ENCODE measurements at regions of chr4 and their contacts with region 1.

Region 1: GRCh38 chr4:121823505-121824170 is at the start of gene CCNA2:
- DNase-seq: peak; percentile 95
- H3K4me3 ChIP-seq: peak within 1 kb of the TSS; percentile 86 to 96 (median 86)
- H3K27ac ChIP-seq: peak within 1 kb of the TSS; percentile 64
- H3K4me1 ChIP-seq: peaks cover 27% of the 10 kb centered on the region
- H3K27me3 ChIP-seq: no peaks in the 10 kb centered on the region
- CTCF ChIP-seq: no peak
- POLR2A ChIP-seq: peak; percentile 73
- total RNA-seq, gene CCNA2: 63.1 and 65.4 TPM in 2 replicates

Region 2: DNA sequence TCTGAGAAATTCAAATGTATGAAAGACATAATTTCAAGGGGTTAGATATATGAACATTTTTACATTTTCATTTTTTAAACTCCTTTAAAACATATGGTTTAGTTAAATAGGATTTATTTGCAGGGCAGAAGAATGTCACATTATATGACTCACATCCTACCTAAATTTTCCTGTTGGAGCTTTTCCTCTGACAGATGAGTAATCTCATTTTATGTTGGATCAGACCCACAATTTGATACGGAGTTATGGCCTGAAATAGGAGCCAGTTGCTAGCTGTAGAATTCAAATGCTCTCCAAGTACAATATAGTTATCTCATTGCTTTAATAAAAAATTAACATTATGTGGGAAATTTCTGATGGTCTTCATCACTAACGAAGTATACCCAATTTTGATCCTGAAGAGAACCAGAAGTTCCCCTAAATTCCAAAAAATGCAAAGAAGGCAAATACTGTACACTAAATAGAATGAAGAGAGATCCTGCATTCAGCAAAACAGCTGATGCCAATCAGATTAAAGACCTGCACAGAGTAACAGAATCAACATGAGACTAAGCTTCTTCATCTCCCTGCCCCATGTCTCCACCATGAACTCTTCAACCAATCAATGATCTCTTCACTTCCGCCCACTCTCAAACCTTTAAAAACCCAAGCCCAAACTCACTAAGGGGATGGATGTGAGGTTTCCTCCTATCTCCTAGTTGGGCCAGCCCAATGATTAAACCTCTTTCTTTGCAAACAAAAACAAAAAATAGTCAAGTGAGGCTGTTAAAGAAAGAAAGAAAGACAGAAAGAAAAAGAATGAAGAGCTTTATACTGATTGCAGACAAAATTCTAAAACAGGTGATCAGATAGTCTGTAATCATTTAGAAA is 33.4 kb before region 1 on chr4:
- CTCF ChIA-PET with region 1: interaction called, 4 read pairs
- POLR2A ChIA-PET with region 1: no interaction called
- dilution Hi-C with region 1: no loop called
- intact Hi-C with region 1: loop called (anchors 1 kb)
- DNase-seq: peak; percentile 84
- H3K4me3 ChIP-seq: peak overlapping the region in 1 of 3 experiments; percentile 29
- H3K27ac ChIP-seq: peak overlapping the region; percentile 64
- H3K4me1 ChIP-seq: peaks cover 20% of the 10 kb centered on the region
- H3K27me3 ChIP-seq: no peaks in the 10 kb centered on the region
- CTCF ChIP-seq: no peak
- POLR2A ChIP-seq: no peak

Region 3: DNA sequence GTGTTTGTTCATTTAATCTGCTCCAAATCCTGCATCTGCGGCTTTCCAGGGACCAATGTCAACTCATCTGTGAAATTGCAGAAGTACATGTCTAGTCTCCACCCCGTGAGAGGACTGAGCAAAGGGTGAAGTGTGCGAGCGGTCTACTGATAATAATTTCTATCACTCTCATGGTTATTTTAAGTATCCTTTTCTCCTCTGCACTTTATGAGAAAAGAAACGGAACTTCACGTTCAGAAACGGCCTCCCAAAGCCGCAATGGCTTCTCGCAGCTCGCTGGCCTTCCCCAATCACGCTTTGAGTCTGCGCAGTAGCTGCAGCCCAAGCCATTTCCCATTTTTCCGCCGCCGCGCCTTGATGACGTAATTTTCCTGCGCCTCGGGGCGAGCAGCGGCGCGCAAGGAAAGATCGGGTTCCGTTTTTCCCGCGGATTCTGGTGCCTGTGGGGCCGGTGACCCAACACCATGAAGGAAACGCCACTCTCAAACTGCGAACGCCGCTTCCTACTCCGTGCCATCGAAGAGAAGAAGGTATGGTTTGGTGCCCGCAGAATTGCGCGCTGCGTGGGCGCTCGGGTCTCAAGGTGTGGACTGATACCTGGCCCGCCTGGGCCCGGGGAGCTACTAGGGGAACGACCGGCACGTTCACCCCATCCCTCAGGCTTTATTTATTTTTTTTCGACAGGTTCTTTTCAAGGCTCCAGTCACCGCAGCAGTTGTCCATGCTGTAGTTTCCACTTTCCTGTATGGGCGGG is 22.5 kb before region 1 on chr4 and contains the start of gene EXOSC9:
- CTCF ChIA-PET with region 1: interaction called, 4 read pairs
- POLR2A ChIA-PET with region 1: no interaction called
- dilution Hi-C with region 1: no loop called
- intact Hi-C with region 1: loop called (anchors 1 kb)
- DNase-seq: peak; percentile 96
- H3K4me3 ChIP-seq: peak within 1 kb of the TSS; percentile 84 to 93 (median 84)
- H3K27ac ChIP-seq: peak within 1 kb of the TSS; percentile 80
- H3K4me1 ChIP-seq: peaks cover 11% of the 10 kb centered on the region
- H3K27me3 ChIP-seq: no peaks in the 10 kb centered on the region
- CTCF ChIP-seq: no peak
- POLR2A ChIP-seq: peak; percentile 91
- total RNA-seq, gene EXOSC9: 46.3 and 47.2 TPM in 2 replicates

Region 4: DNA sequence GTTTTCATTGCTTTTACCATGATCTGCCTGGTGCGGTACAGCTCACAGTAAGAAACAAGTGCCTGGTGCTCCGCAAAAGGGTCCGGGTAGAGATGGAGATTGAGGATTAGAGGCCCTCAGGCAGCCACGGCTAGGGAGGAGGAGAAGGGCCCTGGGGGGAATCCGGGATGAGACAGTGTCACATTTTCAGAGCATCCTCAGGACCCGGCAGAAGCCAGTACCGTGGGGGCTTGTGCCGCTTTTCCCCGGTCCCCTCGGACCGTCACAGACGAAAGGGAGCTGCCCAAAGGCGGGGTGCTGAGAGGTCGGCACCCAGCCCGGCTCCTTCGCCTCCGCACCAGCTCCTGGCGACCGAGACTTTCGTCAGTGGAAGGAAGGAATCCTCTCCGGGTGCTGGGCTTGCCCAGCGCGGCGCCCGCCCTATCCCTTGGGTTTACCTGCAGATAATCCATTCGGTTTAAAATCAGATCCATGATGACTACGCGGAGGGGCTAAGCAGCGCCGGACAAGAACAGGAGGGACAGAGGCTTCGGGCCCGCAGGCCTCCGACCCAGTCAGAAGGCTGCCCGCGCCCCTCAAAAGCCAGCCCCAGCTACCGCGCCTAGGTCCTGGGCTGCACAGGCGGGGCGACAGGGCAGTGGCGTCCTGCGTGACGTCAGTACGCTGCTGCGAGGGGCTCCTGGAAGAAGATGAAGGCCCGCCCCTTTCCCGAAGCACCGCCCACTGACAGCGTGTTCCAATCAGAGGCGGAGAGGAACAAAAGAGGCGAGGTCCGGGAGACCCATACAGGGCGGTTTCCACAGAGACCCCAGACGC is 46.4 kb after region 1 on chr4 and contains the start of gene BBS7:
- CTCF ChIA-PET with region 1: interaction called, 4 read pairs
- POLR2A ChIA-PET with region 1: no interaction called
- dilution Hi-C with region 1: no loop called
- intact Hi-C with region 1: loop called (anchors 1 kb)
- DNase-seq: peak; percentile 99
- H3K4me3 ChIP-seq: peak within 1 kb of the TSS; percentile 76 to 84 (median 80)
- H3K27ac ChIP-seq: peak within 1 kb of the TSS; percentile 58
- H3K4me1 ChIP-seq: peaks cover 10% of the 10 kb centered on the region
- H3K27me3 ChIP-seq: no peaks in the 10 kb centered on the region
- CTCF ChIP-seq: no peak
- POLR2A ChIP-seq: peak; percentile 96
- total RNA-seq, gene BBS7: 20.0 and 22.2 TPM in 2 replicates

Region 5: GRCh38 chr4:122163767-122164166 is 340.1 kb after region 1 on chr4:
- CTCF ChIA-PET with region 1: no interaction called
- POLR2A ChIA-PET with region 1: no interaction called
- dilution Hi-C with region 1: no loop called
- intact Hi-C with region 1: no loop called
- DNase-seq: no peak
- H3K4me3 ChIP-seq: no peak overlapping the region
- H3K27ac ChIP-seq: no peak overlapping the region
- H3K4me1 ChIP-seq: no peaks in the 10 kb centered on the region
- H3K27me3 ChIP-seq: no peaks in the 10 kb centered on the region
- CTCF ChIP-seq: no peak
- POLR2A ChIP-seq: no peak

Measured in endothelial cell of umbilical vein (primary cell).